ENCODE measurements at regions of chr2 and their contacts with region 1.

Region 1: GRCh38 chr2:127330753-127331152 is 36.8 kb upstream of the ERCC3 start:
- DNase-seq: no peak
- ATAC-seq: no peak
- H3K4me3 ChIP-seq: no peak overlapping the region
- H3K27ac ChIP-seq: no peak overlapping the region
- H3K4me1 ChIP-seq: no peaks in the 10 kb centered on the region
- H3K27me3 ChIP-seq: no peaks in the 10 kb centered on the region
- CTCF ChIP-seq: no peak
- POLR2A ChIP-seq: no peak

Region 2: DNA sequence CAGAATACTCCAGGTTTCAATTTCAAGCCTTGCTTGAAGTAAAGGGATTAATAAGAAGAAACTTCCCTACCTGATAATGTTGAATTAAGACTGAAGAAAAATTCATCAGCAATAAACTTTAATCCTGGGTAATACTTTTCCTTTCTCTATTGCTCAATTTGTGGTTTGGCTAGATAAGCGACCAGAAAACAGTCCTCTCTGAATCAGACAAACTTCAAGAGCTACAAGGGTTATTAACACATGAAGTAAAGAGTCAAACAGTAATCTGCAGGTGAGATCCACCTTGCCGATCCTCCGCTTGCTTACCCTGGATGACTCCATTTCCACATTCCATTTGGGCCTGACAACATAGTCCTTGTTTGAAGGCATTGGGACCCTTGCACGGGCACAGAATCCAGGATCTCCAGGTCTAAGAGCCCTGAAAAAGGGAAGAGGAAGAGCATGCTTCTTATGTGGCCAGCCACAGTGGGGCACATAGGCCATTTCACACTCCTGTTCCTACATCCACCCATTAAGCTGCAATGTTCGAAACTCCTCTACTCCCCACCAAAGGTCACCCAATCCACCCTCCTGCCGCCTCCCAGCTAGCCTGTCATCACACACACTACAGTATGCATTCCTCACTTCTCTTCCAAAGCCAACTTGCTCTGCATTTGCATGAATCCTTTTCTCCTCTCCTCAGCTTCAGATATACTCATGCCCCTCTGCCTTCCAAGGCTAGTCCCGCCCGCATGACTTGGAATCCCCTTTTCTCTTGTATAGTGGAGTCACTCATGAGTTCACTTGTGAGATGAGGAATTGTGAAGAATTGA is 155.7 kb after region 1 on chr2:
- in situ Hi-C with region 1: loop called in 2 of 4 experiments (anchors 10 to 25 kb)
- intact Hi-C with region 1: no loop called
- DNase-seq: no peak
- ATAC-seq: no peak
- H3K4me3 ChIP-seq: no peak overlapping the region
- H3K27ac ChIP-seq: no peak overlapping the region
- H3K4me1 ChIP-seq: no peaks in the 10 kb centered on the region
- H3K27me3 ChIP-seq: no peaks in the 10 kb centered on the region
- CTCF ChIP-seq: no peak
- POLR2A ChIP-seq: no peak

Measured in gastrocnemius medialis (tissue), 4 donors.